PC-9 (cell line): ENCODE measurements at regions of chr10 and their contacts with region 1.

Region 1: GRCh38 chr10:29120237-29120636 is 168.6 kb upstream of the LYZL1 start:
- DNase-seq: peak; percentile 68 to 89
- H3K4me3 ChIP-seq: no peak overlapping the region
- H3K27ac ChIP-seq: peak overlapping the region; percentile 42
- H3K4me1 ChIP-seq: peaks cover 12% of the 10 kb centered on the region; the same call in 1 of the 2 replicates
- H3K27me3 ChIP-seq: no peaks in the 10 kb centered on the region
- CTCF ChIP-seq: no peak

Region 2: DNA sequence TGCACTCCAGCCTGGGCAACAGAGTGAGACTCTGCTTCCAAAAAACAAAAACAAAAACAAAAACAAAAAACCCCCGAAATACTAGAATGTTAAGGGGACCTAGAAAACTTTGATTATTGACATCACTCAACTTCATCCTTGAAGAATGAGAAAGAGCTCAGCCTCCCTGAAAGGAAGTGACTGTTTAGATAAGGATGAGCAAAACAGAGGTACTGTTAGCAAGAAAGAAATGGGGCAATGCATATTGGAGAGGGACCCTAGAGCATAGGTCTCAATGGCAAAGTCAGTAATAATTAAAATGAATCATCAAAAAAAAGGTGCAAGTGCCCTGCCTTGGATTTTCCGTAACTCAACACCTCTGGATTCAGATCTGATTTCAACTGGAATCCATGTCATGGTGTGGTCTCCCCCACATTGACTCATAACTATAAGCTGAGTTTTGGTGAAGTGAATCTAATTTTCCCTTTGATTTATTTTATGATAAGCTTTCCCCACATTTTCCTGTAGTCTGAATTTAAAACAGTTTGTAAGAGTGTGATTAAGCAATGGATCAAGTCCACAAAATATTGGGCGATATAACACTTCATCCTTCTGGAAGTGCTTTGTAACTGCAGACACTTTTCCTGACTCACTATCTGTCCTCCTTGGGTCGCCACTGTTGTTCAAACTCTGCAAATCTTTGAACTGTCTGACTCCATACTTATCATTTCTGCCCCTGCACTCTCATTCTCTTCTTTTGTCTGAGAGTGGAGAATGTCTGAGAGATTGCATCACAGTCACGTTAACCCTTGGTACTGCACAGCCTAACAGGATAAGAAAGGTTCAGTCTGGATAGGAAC is 56.2 kb before region 1 on chr10:
- CTCF ChIA-PET with region 1: no interaction called
- POLR2A ChIA-PET with region 1: no interaction called
- intact Hi-C with region 1: loop called (anchors 5 kb)
- DNase-seq: peak; percentile 37 to 76
- H3K4me3 ChIP-seq: peak overlapping the region; percentile 29; the same call in 1 of the 2 replicates
- H3K27ac ChIP-seq: peak overlapping the region; percentile 83
- H3K4me1 ChIP-seq: peaks cover 26% of the 10 kb centered on the region
- H3K27me3 ChIP-seq: no peaks in the 10 kb centered on the region
- CTCF ChIP-seq: no peak; the same call in 1 of the 2 replicates

Region 3: DNA sequence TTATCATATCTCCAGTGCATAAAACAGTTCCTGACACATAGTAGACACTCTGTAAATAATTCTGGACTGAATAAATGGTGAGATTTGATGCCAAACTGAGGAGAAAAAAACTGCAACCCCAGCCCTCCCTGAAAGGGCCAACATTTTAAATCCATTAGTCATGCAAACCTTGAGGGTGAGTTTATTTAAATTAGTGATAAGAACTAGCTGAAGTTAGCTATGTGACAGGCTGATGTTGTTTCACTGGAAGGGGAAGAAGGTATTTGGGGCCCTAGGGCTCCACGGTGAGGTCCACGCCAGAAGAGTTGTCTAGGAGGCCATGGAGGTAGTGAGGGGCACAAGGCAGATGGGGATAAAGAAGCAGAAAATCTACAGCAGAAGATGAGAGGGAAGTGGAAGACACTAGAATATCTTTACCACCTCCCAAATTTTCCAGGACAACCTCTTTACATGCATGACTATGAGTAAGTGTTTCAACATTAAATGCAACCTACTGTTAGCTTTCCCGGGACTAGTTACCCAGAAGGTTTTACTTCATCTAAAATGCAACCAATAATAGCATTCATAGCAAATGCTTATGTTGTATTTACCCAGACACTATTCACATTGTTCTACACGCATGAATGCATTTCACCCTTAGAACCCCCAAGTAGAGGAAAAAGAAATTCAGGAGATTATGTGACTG is 14.6 kb before region 1 on chr10:
- CTCF ChIA-PET with region 1: interaction called, 4 read pairs
- POLR2A ChIA-PET with region 1: no interaction called
- intact Hi-C with region 1: loop called (anchors 2 kb)
- DNase-seq: peak; percentile 51 to 81
- H3K4me3 ChIP-seq: no peak overlapping the region; the same call in 1 of the 2 replicates
- H3K27ac ChIP-seq: peak overlapping the region; percentile 79
- H3K4me1 ChIP-seq: peaks cover 59% of the 10 kb centered on the region
- H3K27me3 ChIP-seq: no peaks in the 10 kb centered on the region
- CTCF ChIP-seq: no peak

Region 4: DNA sequence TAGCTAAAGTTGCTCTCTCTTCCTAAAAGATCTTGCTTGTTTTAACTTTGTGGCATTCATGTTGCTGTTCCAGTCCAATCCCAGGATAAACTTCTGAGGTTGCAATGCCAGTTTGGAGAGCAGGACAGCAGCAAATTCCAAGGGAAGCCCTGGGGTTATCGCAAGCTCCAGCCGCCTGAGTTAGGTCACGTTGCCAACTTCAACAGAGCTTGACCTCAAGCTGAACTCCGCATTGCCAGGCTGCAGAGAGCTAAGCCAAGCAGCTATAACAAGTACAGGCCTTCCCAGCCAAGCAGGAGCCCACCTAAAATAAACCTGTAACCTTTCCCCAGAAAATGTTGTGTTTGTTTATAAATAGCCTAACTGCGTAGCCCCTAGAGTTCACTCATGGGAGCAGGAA is 29.8 kb after region 1 on chr10:
- CTCF ChIA-PET with region 1: no interaction called
- POLR2A ChIA-PET with region 1: interaction called, 19 read pairs
- intact Hi-C with region 1: no loop called
- DNase-seq: peak; percentile 43 to 60
- H3K4me3 ChIP-seq: no peak overlapping the region
- H3K27ac ChIP-seq: no peak overlapping the region
- H3K4me1 ChIP-seq: peaks cover 14% of the 10 kb centered on the region
- H3K27me3 ChIP-seq: no peaks in the 10 kb centered on the region
- CTCF ChIP-seq: no peak

Region 5: DNA sequence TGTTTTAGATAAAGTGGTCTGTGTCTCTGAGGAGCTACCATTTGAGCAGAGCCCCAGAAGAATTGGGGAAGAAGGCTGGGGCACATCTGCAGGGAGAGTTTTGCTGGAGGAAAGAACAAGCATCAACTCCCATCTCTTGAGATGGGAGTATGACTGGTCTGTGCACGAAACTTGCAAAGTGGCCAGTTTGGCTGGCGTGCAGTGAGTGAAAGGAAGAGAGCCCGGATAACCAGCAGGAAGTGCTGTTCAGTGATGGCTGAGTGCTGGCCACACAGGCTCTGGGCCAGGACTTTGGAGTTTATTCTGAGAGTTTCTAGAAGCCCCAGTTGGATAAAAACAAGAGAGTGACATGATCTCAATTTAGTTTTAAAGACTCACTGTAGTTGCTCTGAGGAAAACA is 548.9 kb after region 1 on chr10:
- CTCF ChIA-PET with region 1: no interaction called
- POLR2A ChIA-PET with region 1: no interaction called
- intact Hi-C with region 1: no loop called
- DNase-seq: no peak
- H3K4me3 ChIP-seq: no peak overlapping the region
- H3K27ac ChIP-seq: peak overlapping the region; percentile 62
- H3K4me1 ChIP-seq: peaks cover 29% of the 10 kb centered on the region
- H3K27me3 ChIP-seq: no peaks in the 10 kb centered on the region
- CTCF ChIP-seq: no peak